CD14-positive monocyte (primary cell): ENCODE measurements at regions of chr13 and their contacts with region 1.

Region 1: GRCh38 chr13:32117701-32118100 is 86.1 kb downstream of the FRY start:
- DNase-seq: peak; percentile 47 to 82 (median 80)
- H3K4me3 ChIP-seq: peak overlapping the region in 1 of 3 experiments; percentile 6
- H3K4me3 Mint-ChIP-seq: no peak overlapping the region
- H3K27ac ChIP-seq: peak overlapping the region; percentile 49 to 90
- H3K27ac Mint-ChIP-seq: peak overlapping the region; percentile 72 to 89 (median 84)
- H3K4me1 ChIP-seq: peaks cover 41 to 56% of the 10 kb centered on the region in 2 donors
- H3K4me1 Mint-ChIP-seq: peaks cover 50% of the 10 kb centered on the region
- H3K27me3 ChIP-seq: no peaks in the 10 kb centered on the region
- H3K27me3 Mint-ChIP-seq: no peaks in the 10 kb centered on the region
- CTCF ChIP-seq: no peak

Region 2: DNA sequence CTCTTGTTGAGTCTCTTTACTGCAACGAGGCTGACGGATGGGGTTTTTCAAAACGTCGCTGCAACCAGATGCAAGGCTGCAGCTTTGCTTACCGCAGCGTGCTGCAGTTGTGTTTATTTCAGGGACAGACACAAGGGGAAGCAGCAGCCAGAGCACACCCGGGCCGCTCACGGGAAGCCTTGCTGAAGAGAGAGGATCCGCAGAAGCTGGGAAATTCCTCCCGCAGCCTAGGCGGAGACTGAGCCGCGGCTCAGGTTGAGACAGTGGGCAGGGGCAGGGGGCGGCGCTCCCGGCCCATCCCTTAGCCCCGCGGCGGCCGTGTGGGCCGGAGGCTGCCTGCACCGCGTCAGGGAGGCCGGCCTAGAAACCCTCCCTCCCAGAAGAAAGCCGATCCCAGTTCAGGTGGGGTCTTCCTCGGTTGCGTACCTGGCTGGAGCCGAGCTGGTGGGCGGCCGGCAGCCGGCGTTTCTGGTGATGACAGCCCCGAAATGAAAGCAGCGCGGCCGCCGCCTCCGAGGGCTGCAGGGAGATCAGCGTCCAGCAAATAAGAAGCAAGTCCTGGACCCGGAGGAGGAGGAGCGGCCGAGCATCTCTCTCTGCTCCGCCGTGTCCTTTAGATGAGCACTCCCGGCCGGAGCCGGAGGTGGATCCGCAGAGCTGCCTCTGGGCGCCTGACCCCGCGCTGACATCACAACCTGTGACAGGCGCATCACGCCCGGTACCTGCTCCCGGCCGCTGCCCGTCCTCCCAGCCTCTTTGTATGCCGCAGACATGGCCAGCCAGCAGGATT is 86.5 kb before region 1 on chr13 and contains the start of gene FRY:
- intact Hi-C with region 1: loop called (anchors 10 kb)
- DNase-seq: peak; percentile 58 to 86 (median 71)
- H3K4me3 ChIP-seq: peak within 1 kb of the TSS; percentile 71 to 92 (median 91)
- H3K4me3 Mint-ChIP-seq: peak within 1 kb of the TSS; percentile 95 to 96
- H3K27ac ChIP-seq: peak within 1 kb of the TSS; percentile 91 to 93
- H3K27ac Mint-ChIP-seq: peak within 1 kb of the TSS; percentile 92 to 97 (median 95)
- H3K4me1 ChIP-seq: peaks cover 50 to 60% of the 10 kb centered on the region in 2 donors
- H3K4me1 Mint-ChIP-seq: peaks cover 62% of the 10 kb centered on the region
- H3K27me3 ChIP-seq: no peaks in the 10 kb centered on the region
- H3K27me3 Mint-ChIP-seq: no peaks in the 10 kb centered on the region
- CTCF ChIP-seq: peak; percentile 20
- polyA plus RNA-seq, gene FRY: 3.9 to 31.8 (median 5.0) TPM

Region 3: GRCh38 chr13:32415019-32415418 is 297.3 kb after region 1 on chr13:
- intact Hi-C with region 1: no loop called
- DNase-seq: peak in 2 of 3 donors; percentile 16 to 23
- H3K4me3 ChIP-seq: no peak overlapping the region
- H3K4me3 Mint-ChIP-seq: no peak overlapping the region
- H3K27ac ChIP-seq: no peak overlapping the region
- H3K27ac Mint-ChIP-seq: peak overlapping the region in 1 of 7 donors; percentile 30
- H3K4me1 ChIP-seq: no peaks in the 10 kb centered on the region
- H3K4me1 Mint-ChIP-seq: peaks cover 6% of the 10 kb centered on the region
- H3K27me3 ChIP-seq: no peaks in the 10 kb centered on the region
- H3K27me3 Mint-ChIP-seq: no peaks in the 10 kb centered on the region
- CTCF ChIP-seq: peak; percentile 74